OCI-LY7 (cell line): ENCODE measurements at regions of chr16 and their contacts with region 1.

Region 1: GRCh38 chr16:74998481-74999218 is at the start of gene ZNRF1:
- DNase-seq: peak; percentile 84
- H3K4me3 ChIP-seq: peak within 1 kb of the TSS; percentile 92
- H3K27ac ChIP-seq: peak within 1 kb of the TSS; percentile 29
- H3K4me1 ChIP-seq: peaks cover 26% of the 10 kb centered on the region
- CTCF ChIP-seq: peak; percentile 87
- total RNA-seq, gene ZNRF1: 11.8 and 13.1 TPM in 2 replicates

Region 2: GRCh38 chr16:74984535-74985296 is 13.9 kb before region 1 on chr16 and contains the start of gene WDR59:
- CTCF ChIA-PET with region 1: interaction called, 4 read pairs
- POLR2A ChIA-PET with region 1: interaction called, 19 read pairs
- intact Hi-C with region 1: no loop called
- DNase-seq: peak; percentile 100
- H3K4me3 ChIP-seq: peak within 1 kb of the TSS; percentile 98
- H3K27ac ChIP-seq: peak within 1 kb of the TSS; percentile 41
- H3K4me1 ChIP-seq: no peaks in the 10 kb centered on the region
- CTCF ChIP-seq: no peak
- total RNA-seq, gene WDR59: 25.2 and 26.3 TPM in 2 replicates

Region 3: DNA sequence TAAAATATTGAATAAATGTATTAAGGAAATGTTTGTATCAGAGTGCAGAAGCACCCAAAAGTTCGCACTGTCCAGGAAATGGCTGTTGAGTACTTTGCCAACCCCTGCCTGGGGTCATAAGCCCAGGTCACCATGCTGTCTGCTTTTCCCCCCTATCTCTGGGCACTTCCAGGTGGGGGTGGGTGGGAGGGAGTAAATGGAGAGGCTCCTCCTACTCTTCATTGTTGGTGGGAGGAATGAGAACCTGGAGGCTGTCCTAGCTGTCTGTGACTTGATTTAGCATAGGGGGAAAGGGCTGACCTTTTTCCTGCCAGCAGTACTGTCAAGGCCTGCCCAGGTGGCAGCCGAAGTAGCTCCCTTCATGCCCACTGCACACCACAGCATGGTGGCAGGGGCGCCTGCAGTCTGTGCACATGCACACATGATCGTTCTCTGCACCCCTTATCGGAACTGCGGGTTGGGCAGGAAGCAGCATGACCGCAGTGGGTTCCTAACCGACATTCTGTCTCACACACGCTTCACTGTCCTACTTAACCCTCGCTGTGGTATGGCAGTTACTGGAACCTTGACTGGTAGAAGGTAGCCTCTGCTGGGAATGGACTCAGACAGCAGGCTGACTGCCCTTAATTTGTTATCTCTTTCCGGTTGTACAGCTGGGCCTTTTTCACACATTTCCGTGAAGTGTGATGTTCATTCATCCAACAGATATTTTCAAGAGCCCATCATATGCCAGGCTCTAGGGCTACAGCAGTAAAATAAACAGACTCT is 76.5 kb after region 1 on chr16:
- CTCF ChIA-PET with region 1: no interaction called
- POLR2A ChIA-PET with region 1: no interaction called
- intact Hi-C with region 1: loop called (anchors 1 kb)
- DNase-seq: peak; percentile 88
- H3K4me3 ChIP-seq: peak overlapping the region; percentile 54
- H3K27ac ChIP-seq: peak overlapping the region; percentile 86
- H3K4me1 ChIP-seq: peaks cover 30% of the 10 kb centered on the region
- CTCF ChIP-seq: no peak

Region 4: GRCh38 chr16:75361936-75362335 is 363.3 kb after region 1 on chr16:
- CTCF ChIA-PET with region 1: no interaction called
- POLR2A ChIA-PET with region 1: no interaction called
- intact Hi-C with region 1: no loop called
- DNase-seq: no peak
- H3K4me3 ChIP-seq: no peak overlapping the region
- H3K27ac ChIP-seq: no peak overlapping the region
- H3K4me1 ChIP-seq: no peaks in the 10 kb centered on the region
- CTCF ChIP-seq: no peak